ENCODE measurements at regions of chr17 and their contacts with region 1.

Region 1: GRCh38 chr17:74601944-74602572 is 10.0 kb upstream of the CD300LD start:
- DNase-seq: peak; percentile 28
- H3K4me3 ChIP-seq: no peak overlapping the region
- H3K27ac ChIP-seq: no peak overlapping the region
- H3K4me1 ChIP-seq: peaks cover 13% of the 10 kb centered on the region
- H3K27me3 ChIP-seq: no peaks in the 10 kb centered on the region
- CTCF ChIP-seq: peak; percentile 73 to 76

Region 2: DNA sequence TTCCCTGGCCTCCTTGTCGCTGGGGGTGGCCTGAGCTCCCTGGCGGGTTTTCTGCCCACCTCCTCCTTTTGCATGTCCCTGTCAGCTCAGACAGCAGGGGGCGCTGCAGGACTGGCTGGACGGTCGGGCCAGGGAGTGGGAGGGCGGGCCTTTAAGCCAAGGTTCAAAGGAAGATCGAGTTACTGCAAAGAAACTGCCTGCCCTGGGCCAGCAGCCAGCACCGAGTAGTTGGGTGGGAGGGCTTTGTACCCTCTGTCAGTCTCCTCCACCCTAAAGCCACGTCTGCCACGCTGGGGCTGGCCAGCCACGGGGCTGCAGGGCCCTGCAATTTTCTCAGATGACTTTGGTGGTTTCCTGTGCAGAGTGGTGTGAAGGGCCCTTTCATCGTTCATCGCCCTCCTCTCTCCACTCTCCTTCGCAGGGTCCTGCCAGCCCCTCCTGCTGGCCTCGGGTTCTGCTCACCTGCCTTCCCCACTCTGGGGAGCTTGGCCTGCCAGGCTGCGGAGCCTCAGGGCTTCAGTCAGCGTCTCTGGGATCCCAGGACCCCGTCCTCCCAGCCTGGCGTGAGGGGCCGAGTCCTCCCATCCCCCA is 222.5 kb before region 1 on chr17:
- CTCF ChIA-PET with region 1: no interaction called
- dilution Hi-C with region 1: no loop called
- in situ Hi-C with region 1: no loop called
- intact Hi-C with region 1: loop called (anchors 1 kb)
- DNase-seq: peak; percentile 58
- H3K4me3 ChIP-seq: no peak overlapping the region
- H3K27ac ChIP-seq: no peak overlapping the region
- H3K4me1 ChIP-seq: peaks cover 10% of the 10 kb centered on the region
- H3K27me3 ChIP-seq: no peaks in the 10 kb centered on the region
- CTCF ChIP-seq: peak; percentile 56 to 93

Region 3: DNA sequence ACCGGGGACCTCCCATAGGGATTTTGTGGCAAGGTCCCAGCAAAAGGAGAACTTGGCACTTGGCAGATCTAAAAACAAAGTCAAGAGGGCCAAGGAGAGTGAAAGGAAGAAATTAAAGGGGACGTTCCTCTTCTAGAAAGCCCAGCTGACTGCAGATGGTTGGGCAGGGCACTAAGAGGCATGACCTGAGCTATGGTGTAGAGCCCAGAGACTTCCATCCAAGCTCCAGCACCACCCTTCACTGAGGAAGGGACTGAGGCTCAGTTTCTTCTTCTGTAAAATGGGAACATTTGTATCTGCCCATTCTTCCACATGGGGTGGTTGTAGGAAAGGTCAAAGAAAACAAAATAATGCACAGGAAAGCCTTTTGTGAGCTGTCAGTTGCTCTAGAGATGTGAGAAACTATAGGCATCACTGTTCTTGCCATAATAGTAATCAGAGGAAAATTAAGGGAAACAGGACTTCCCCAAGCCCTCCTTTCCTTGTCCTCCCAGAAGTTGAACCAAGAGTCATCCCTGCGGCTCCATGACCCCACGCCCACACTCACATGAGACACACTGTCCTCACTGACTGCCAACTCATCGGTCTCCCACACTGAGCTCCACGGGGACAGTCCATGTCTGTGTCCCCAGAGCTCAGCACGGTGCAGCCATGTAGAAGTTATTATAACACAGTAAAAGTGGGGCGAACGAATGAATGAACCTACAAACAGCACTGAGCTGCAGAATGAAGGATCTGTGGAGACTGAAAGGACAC is 100.2 kb after region 1 on chr17:
- CTCF ChIA-PET with region 1: no interaction called
- dilution Hi-C with region 1: no loop called
- in situ Hi-C with region 1: no loop called
- intact Hi-C with region 1: no loop called
- DNase-seq: no peak
- H3K4me3 ChIP-seq: no peak overlapping the region
- H3K27ac ChIP-seq: no peak overlapping the region
- H3K4me1 ChIP-seq: no peaks in the 10 kb centered on the region
- H3K27me3 ChIP-seq: no peaks in the 10 kb centered on the region
- CTCF ChIP-seq: no peak